Posterior vena cava (tissue), 2 donors: ENCODE measurements at regions of chr1 and their contacts with region 1.

Region 1: DNA sequence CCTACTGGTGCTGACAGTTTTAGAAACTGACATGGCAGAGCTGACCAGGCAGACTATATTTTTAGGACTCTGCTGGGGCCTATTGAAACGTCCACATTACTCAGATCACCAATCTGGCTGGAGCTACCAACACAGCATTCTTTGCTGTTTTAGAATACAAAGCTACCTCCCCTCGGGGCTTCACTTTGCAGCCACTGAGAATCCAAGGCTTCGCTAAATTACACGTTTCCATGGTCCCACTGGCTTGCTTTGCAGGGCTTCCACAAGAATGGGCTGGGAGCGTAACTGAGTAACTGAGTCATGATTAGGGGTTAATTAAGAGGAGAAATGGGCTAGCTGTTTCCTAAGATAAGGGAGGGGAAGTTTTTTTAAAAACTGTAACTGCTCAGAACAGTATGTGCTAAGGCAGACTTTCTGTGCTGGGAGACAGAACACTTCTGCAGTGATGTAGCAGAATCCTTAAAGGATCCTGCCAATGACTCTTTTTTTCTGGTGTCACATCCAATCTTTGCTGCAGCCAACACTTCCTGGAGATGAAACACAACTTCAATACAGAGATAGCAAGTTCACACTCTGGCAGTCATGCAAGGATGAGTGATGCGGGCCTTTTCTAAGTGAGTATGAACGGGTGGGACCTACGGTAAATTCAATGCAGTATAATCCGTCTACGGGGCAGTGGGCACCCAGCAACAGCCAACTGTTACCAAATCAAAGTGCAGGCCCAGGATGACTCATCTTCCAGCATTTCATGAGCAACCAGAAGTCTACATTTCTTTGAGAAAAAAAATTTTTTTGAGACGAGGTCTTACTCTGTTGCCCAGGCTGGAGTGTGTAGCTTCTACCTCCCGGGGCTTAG is 21.5 kb downstream of the NDUFS5 start:
- DNase-seq: peak; percentile 89

Region 2: DNA sequence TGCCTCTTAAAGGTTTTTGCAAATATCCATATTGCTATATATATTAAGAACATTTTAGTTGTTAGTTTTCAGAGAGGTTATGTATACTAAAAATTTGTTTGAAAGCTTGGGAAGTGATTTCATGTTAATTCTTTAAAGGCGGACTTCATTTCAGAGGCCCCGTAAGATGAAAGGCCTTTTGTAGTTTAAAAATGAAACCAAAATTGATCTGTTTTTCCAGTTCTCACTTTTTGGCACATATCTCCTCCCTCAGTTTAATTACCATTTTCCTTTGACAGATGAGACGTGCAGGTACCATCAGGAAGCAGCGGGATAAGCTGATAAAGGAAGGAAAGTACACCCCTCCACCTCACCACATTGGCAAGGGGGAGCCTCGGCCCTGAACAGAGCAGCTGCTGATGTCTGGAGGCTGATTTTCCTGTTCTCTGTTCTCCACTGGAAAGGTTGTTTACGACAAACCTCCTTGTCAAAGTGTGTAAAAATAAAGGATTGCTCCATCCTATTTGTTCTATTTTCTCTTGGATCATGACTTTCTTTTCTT is 13.4 kb before region 1 on chr1:
- intact Hi-C with region 1: no loop called
- DNase-seq: no peak

Region 3: GRCh38 chr1:39063775-39064174 is 16.2 kb after region 1 on chr1:
- intact Hi-C with region 1: loop called in 1 of 2 experiments (anchors 2 kb)
- DNase-seq: peak; percentile 6

Region 4: GRCh38 chr1:39086865-39087409 is 39.3 kb after region 1 on chr1:
- intact Hi-C with region 1: loop called (anchors 5 kb)
- DNase-seq: peak; percentile 83